ENCODE measurements at regions of chr19 and their contacts with region 1.

Region 1: GRCh38 chr19:14147797-14148605 is 11.6 kb upstream of the ASF1B start:
- DNase-seq: peak; percentile 74 to 79
- ATAC-seq: peak; percentile 84 to 91 (median 86)
- H3K4me3 ChIP-seq: peak overlapping the region in 2 of 10 donors; percentile 24 to 33
- H3K27ac ChIP-seq: peak overlapping the region; percentile 25 to 90 (median 86)
- H3K4me1 ChIP-seq: peaks cover 2 to 47% (median 32%) of the 10 kb centered on the region in 9 donors
- H3K27me3 ChIP-seq: no peaks in the 10 kb centered on the region
- CTCF ChIP-seq: peak; percentile 77 to 95 (median 89)

Region 2: DNA sequence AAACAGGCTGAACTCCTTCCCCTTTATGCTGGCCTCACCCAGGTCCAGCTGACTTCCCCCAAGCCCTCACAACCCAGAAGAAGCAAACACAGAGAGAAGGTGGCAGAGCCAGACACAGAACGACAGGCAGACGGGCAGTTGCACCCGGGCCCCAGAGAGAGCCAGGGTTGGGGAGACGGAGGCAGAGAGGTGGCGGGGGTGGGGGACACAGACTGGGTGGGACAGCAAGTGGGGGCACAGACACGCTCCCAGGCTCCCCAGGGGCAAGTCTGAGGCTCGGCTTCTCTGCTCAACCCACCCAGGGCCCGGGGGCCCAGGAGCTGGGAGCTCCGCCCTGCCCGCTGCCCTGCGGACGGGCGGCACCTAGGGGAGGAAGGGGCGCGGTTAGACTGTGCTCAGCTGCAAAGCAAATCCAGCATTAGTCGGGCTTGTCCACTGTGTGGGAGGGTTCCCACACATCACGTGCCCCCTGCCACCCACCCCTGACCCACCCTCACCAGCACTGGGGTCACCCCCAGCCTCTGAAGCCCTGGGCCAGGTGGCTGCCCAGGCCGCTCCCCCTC is 19.7 kb after region 1 on chr19:
- intact Hi-C with region 1: loop called in 1 of 10 experiments (anchors 1 kb)
- DNase-seq: no peak
- ATAC-seq: peak; percentile 54 to 78 (median 73)
- H3K4me3 ChIP-seq: peak overlapping the region in 6 of 10 donors; percentile 14 to 37 (median 21)
- H3K27ac ChIP-seq: peak overlapping the region in 9 of 10 donors; percentile 39 to 65 (median 52)
- H3K4me1 ChIP-seq: peaks cover 0 to 24% (median 13%) of the 10 kb centered on the region in 9 donors
- H3K27me3 ChIP-seq: no peaks in the 10 kb centered on the region
- CTCF ChIP-seq: peak in 3 of 9 donors; percentile 7 to 19 (median 12)

Region 3: GRCh38 chr19:14277608-14278007 is 129.6 kb after region 1 on chr19:
- intact Hi-C with region 1: loop called in 1 of 10 experiments (anchors 10 kb)
- DNase-seq: no peak
- ATAC-seq: peak in 1 of 8 donors; percentile 44
- H3K4me3 ChIP-seq: no peak overlapping the region
- H3K27ac ChIP-seq: no peak overlapping the region
- H3K4me1 ChIP-seq: peaks cover 0 to 4% (median 0%) of the 10 kb centered on the region in 9 donors
- H3K27me3 ChIP-seq: peaks cover 0 to 39% (median 6%) of the 10 kb centered on the region in 7 donors
- CTCF ChIP-seq: no peak

Region 4: DNA sequence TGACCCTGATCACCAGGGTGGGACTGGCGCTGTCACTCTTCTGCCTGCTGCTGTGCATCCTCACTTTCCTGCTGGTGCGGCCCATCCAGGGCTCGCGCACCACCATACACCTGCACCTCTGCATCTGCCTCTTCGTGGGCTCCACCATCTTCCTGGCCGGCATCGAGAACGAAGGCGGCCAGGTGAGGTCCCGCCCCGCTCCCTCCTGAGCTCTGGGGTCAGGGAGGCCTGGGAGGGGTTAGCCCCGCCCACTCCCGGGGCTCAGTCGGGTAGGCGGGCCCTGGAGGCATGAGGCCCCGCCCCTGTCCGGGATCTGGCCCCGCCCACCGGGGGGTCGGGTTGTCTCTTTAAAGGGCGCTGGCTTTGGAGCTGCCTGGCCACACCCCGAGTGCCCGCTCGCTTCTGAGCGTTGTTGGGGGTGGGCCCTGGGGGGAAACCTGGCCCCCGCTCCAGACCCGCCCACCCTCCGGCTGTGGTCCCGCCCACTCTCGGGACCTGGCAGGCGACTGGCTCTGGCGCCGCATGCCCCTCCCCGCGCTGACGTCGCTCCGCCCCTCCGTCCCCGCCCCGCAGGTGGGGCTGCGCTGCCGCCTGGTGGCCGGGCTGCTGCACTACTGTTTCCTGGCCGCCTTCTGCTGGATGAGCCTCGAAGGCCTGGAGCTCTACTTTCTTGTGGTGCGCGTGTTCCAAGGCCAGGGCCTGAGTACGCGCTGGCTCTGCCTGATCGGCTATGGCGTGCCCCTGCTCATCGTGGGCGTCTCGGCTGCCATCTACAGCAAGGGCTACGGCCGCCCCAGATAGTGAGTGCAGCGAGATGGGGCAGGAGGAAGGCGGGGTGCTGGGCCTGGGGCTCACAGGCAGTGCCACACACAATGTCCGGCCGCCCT is 258.0 kb after region 1 on chr19:
- intact Hi-C with region 1: loop called in 5 of 10 experiments (anchors 2 to 10 kb)
- DNase-seq: peak; percentile 82 to 89
- ATAC-seq: peak; percentile 86 to 93 (median 90)
- H3K4me3 ChIP-seq: peak overlapping the region in 7 of 10 donors; percentile 13 to 40 (median 37)
- H3K27ac ChIP-seq: peak overlapping the region in 9 of 10 donors; percentile 13 to 82 (median 62)
- H3K4me1 ChIP-seq: peaks cover 0 to 19% (median 10%) of the 10 kb centered on the region in 9 donors
- H3K27me3 ChIP-seq: no peaks in the 10 kb centered on the region
- CTCF ChIP-seq: peak; percentile 88 to 97 (median 94)

Region 5: GRCh38 chr19:14479975-14480699 is 332.1 kb after region 1 on chr19:
- intact Hi-C with region 1: loop called in 3 of 10 experiments (anchors 10 kb)
- DNase-seq: peak in 1 of 2 donors; percentile 56
- ATAC-seq: peak in 5 of 8 donors; percentile 20 to 45 (median 21)
- H3K4me3 ChIP-seq: no peak overlapping the region
- H3K27ac ChIP-seq: no peak overlapping the region
- H3K4me1 ChIP-seq: peaks cover 0 to 28% (median 14%) of the 10 kb centered on the region in 9 donors
- H3K27me3 ChIP-seq: peaks cover 0 to 10% (median 6%) of the 10 kb centered on the region in 7 donors
- CTCF ChIP-seq: peak; percentile 51 to 95 (median 71)